T-cell (primary cell): ENCODE measurements at regions of chr14 and their contacts with region 1.

Region 1: DNA sequence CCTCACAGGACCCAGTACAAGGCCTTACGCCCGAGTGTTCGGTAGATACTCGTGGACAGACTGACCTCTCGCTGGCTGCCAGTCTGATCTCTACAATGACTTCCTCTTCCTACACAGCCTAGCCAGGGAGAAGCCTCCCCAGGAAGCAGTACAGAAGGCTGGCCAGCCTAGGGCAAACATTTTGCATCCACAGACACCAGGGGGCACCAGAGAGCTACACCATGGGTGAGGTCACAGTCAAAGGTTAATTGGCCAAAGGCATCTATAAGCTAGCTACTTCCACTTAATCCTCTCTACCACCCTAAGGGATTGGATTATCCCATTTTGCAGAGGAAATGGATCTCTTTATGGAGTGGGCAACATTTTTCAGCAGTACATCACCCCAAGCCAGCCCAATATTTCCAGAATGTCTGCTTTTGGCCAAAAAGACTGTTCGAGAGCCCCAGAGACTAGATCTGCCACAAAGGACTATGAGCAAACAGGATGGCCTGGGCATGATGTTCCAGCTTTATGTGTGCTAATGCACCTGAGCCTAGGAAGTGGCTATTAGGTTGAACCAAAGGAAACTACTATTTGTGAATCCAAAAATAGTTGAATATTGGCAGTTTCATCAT is 14.6 kb upstream of the PNMA1 start:
- DNase-seq: peak; percentile 53 to 91 (median 83)
- ATAC-seq: peak; percentile 84 to 91 (median 90)
- H3K4me3 ChIP-seq: no peak overlapping the region
- H3K4me3 Mint-ChIP-seq: no peak overlapping the region
- H3K27ac ChIP-seq: peak overlapping the region; percentile 31
- H3K27ac Mint-ChIP-seq: peak overlapping the region; percentile 58 to 81
- H3K4me1 ChIP-seq: peaks cover 0 to 18% of the 10 kb centered on the region in 2 experiments
- H3K4me1 Mint-ChIP-seq: peaks cover 11 to 24% (median 22%) of the 10 kb centered on the region in 3 donors
- H3K27me3 ChIP-seq: no peaks in the 10 kb centered on the region
- H3K27me3 Mint-ChIP-seq: no peaks in the 10 kb centered on the region

Region 2: DNA sequence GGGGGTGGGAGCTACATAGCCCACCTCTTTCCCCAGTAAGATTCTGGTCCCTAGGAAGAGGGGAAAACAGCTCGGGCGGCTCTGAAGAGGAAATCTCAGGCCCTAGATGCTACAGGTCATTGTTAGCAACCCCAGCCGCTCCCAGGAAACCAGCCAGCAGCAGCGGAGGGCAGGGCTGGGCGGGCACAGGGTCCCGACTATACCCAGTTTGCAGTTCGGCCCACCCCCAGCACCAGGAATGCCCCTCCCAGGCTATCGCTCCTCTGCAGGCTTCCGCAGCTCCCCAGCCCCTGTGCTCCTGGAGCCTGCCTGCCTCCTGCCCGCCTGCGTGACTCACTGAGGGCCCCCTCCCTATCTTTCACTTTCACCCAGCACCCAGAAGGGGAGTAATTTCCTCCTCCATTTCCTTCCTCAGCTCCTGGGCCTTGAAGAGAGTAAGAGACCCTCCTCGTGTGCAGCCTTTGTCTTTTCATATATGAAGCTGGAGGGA is 12.6 kb after region 1 on chr14:
- CTCF ChIA-PET with region 1: interaction called, 5 to 18 read pairs
- POLR2A ChIA-PET with region 1: interaction called in 1 of 2 experiments, 3 read pairs
- DNase-seq: peak in 28 of 35 experiments; percentile 32 to 80 (median 46)
- ATAC-seq: peak; percentile 71 to 79 (median 76)
- H3K4me3 ChIP-seq: peak overlapping the region; percentile 16 to 42
- H3K4me3 Mint-ChIP-seq: peak overlapping the region; percentile 66 to 90 (median 70)
- H3K27ac ChIP-seq: peak overlapping the region; percentile 86
- H3K27ac Mint-ChIP-seq: peak overlapping the region; percentile 93 to 96
- H3K4me1 ChIP-seq: peaks cover 51 to 81% of the 10 kb centered on the region in 2 experiments
- H3K4me1 Mint-ChIP-seq: peaks cover 59 to 70% (median 68%) of the 10 kb centered on the region in 3 donors
- H3K27me3 ChIP-seq: no peaks in the 10 kb centered on the region
- H3K27me3 Mint-ChIP-seq: no peaks in the 10 kb centered on the region

Region 3: DNA sequence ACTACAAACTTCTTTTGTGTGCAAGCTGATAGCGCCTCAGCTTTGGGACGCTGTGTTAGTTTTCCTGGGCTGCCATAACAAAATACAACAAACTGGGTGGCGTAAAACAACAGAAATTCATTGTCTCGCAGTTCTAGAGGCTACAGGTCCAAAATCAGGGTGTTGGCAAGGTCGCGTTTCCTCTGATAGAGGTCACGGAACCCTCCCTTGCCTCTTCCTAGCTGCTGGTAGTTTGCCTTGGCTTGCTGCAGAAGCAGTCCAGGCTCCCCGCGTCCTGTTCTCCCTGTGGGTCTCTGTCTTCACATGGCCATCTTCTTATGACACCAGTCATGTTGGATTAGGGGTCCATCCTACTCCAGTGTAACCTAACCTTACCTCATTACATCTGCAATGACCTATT is 90.0 kb after region 1 on chr14:
- CTCF ChIA-PET with region 1: interaction called, 44 to 67 read pairs
- POLR2A ChIA-PET with region 1: no interaction called
- DNase-seq: no peak
- ATAC-seq: no peak
- H3K4me3 ChIP-seq: no peak overlapping the region
- H3K4me3 Mint-ChIP-seq: no peak overlapping the region
- H3K27ac ChIP-seq: no peak overlapping the region
- H3K27ac Mint-ChIP-seq: no peak overlapping the region
- H3K4me1 ChIP-seq: no peaks in the 10 kb centered on the region
- H3K4me1 Mint-ChIP-seq: peaks cover 0 to 12% (median 0%) of the 10 kb centered on the region in 3 donors
- H3K27me3 ChIP-seq: peaks cover 0 to 2% of the 10 kb centered on the region in 2 experiments
- H3K27me3 Mint-ChIP-seq: no peaks in the 10 kb centered on the region

Region 4: DNA sequence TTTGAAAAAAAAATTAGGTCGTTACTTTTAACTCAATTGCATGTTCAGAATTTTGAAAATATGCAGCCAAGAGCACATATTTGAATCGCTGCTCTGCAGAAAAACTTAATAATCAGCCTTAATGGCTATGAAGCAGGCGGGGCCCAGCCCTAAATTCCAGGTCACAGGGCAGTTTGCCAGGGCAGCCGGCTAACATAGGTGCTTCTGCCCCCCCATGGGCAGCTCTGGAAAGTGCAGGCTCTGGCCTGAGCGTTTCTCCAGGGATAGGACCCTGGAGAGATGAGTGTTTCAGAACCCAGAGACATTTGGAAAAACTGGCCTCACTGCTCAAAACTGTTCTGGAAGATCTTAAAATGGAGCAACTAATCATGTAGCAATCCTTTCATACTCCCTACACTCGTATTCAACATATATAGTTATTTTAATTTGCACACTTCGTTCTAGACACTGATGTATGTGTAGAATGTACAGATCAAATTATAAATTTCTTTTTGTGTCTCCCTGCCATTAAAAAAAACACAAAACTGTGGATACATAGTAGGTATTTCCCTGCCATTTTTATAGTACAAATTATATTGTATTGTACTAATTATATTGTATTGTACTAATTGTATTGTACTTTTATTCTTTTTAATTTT is 96.8 kb after region 1 on chr14:
- CTCF ChIA-PET with region 1: interaction called, 44 to 67 read pairs
- POLR2A ChIA-PET with region 1: no interaction called
- DNase-seq: peak; percentile 34 to 87 (median 73)
- ATAC-seq: peak; percentile 94 to 99 (median 98)
- H3K4me3 ChIP-seq: no peak overlapping the region
- H3K4me3 Mint-ChIP-seq: no peak overlapping the region
- H3K27ac ChIP-seq: no peak overlapping the region
- H3K27ac Mint-ChIP-seq: peak overlapping the region in 1 of 2 donors; percentile 44
- H3K4me1 ChIP-seq: no peaks in the 10 kb centered on the region
- H3K4me1 Mint-ChIP-seq: peaks cover 5 to 10% (median 5%) of the 10 kb centered on the region in 3 donors
- H3K27me3 ChIP-seq: no peaks in the 10 kb centered on the region
- H3K27me3 Mint-ChIP-seq: no peaks in the 10 kb centered on the region